Posterior vena cava (tissue), 2 donors: ENCODE measurements at regions of chr11 and their contacts with region 1.

Region 1: DNA sequence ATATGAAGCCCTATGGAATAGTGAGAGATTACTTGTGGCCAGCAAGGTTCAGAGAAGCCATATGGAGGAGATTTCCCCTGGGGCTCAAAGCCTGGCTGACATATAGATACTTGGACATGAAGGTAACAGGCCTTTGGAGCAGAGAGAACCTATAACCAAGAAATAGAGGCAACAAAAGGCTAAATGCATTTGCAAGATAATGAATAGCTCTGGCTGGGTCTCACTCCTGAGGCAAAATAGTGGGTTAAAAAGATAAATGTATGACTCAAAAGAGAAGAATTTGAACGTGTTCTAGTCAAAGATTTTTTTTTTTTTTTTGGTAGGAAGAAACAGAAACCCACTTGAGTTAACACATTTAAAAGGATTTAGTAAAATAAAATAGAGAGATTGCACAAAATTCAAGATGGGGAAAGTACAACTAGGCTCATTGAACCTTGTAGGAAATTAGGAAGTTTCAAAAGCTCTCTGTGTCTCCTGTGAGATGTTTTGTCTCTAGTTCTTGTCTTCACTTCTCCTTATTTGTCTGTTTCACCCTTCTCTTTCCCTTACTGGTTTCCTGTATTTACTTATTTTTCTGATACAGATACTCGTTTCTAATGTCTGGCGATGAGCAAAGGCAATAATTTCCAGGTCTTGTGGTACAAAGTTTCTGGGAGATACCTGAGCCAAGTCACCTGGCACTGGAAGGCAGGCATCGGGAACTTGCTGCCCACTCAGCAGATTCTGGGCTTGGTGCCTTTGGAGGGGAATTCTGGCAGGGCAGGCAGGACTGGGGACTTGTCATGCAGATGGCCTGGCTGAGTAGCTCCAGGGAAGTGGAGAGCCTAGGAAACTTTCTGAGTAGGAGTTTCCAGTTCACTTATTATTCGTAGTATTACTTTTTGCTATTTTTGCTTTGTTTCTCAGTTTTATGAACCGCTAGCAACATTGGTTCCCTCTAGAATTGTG is 49.2 kb upstream of the SESN3 start:
- DNase-seq: no peak

Region 2: DNA sequence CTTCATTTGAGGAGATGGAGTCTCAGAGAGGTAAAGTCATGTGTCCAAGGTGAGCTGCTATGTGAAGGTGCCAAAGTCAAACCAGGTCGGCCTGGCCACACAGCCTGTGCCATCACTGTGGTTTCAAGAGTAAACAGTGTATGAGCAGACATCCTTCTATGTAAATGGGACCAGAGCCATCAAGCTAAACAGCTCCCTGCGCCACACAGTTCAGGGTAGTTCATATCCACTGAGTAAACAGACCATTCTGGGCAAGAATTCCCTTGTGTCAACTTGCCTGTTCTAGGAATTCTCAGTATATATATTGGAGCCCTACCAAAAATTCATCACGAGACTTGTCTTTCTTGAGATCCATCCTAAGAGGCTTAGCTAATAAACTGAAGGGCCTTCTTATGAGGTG is 434.6 kb before region 1 on chr11:
- intact Hi-C with region 1: no loop called
- DNase-seq: no peak

Region 3: GRCh38 chr11:94862926-94863880 is 417.0 kb before region 1 on chr11:
- intact Hi-C with region 1: no loop called
- DNase-seq: no peak

Region 4: GRCh38 chr11:95256321-95256779 is 23.8 kb before region 1 on chr11:
- intact Hi-C with region 1: loop called in 1 of 2 experiments (anchors 1 kb)
- DNase-seq: no peak